Activated naive CD4-positive, alpha-beta T cell treated with anti-CD3 and anti-CD28 coated beads, Interleukin-2, amount 10 ng/mL, durations not matched to agents 7 days and 5 days (primary cell): ENCODE measurements at regions of chr5 and their contacts with region 1.

Region 1: DNA sequence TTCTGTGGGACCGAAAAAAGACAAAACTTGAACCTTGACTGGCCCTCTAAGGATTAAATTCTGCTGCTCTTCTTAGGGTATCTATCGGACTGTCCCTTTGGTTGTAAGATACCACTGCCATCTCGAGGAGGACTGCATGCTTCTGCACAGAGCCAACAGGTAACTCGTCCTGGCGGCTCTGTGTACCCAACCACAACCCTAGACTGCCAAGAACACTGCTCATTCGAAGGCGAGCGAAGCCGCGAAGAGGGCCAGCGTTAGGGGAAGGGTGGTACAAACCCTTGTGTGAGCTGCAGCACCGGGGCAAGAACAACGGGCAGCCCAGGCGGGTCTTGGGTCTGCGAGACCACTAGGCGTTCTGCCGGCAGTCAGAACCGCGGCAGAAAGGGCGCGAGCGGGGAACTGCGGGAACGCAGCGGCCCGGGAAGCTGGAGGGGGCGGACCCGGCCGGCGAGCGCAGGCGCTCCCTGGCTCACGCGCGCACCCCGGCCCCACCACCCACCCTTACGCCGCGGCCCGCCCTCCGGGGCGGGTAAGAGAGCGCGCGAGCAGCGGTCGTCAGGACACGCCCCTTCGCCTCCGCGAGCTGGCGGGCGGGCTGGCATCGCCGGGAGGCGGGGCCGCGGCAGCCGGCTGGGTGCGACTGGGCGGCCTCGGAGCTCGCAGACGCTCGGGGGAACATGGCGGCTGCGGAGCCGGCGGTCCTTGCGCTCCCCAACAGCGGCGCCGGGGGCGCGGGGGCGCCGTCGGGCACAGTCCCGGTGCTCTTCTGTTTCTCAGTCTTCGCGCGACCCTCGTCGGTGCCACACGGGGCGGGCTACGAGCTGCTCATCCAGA is at the start of gene ISOC1:
- DNase-seq: peak; percentile 93
- H3K4me3 Mint-ChIP-seq: peak within 1 kb of the TSS; percentile 85
- H3K27ac Mint-ChIP-seq: peak within 1 kb of the TSS; percentile 73
- H3K4me1 Mint-ChIP-seq: peaks cover 30% of the 10 kb centered on the region
- H3K27me3 Mint-ChIP-seq: peaks cover 10% of the 10 kb centered on the region

Region 2: DNA sequence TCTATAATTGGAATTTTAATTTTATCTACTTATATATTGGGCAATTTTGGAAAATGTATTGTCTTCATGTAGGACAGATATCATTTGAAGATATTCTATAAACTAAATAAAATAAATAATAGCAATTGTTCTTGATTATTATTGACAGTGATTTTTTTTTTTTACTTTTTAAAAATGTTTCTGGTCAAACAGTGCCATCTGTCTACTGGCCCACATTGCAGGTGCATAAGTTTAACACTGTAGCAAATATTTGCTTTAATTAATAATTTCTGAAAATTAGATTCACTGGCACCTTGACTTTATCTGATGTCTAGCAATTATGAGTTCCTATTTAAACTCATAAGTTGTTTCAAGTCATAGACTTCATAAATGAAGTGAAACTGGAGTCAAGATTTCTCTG is 40.9 kb before region 1 on chr5:
- CTCF ChIA-PET with region 1: no interaction called
- DNase-seq: no peak
- H3K4me3 Mint-ChIP-seq: no peak overlapping the region
- H3K27ac Mint-ChIP-seq: no peak overlapping the region
- H3K4me1 Mint-ChIP-seq: no peaks in the 10 kb centered on the region
- H3K27me3 Mint-ChIP-seq: no peaks in the 10 kb centered on the region

Region 3: DNA sequence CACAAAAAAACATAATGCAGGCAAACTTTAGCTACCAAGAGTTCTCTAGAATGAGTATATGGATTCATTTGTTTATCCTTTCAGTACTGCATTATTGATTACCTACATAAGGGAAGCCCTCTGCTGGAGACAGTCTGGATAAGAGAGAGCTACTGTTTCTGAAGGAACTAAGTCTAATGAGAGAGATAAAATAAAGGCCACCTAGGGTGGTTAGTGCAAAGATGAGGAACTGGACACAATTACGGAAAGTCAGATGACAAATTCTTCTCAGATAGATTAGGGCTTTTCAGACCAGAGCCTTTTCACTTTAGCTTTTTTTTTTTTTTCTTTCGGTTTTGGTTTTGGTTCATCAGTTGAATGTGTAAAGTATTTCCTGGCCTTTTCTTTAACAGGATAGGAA is 31.5 kb after region 1 on chr5:
- CTCF ChIA-PET with region 1: interaction called, 11 read pairs
- DNase-seq: no peak
- H3K4me3 Mint-ChIP-seq: peak overlapping the region; percentile 35
- H3K27ac Mint-ChIP-seq: peak overlapping the region; percentile 87
- H3K4me1 Mint-ChIP-seq: peaks cover 16% of the 10 kb centered on the region
- H3K27me3 Mint-ChIP-seq: no peaks in the 10 kb centered on the region